ENCODE measurements at regions of chr1 and their contacts with region 1.

Region 1: DNA sequence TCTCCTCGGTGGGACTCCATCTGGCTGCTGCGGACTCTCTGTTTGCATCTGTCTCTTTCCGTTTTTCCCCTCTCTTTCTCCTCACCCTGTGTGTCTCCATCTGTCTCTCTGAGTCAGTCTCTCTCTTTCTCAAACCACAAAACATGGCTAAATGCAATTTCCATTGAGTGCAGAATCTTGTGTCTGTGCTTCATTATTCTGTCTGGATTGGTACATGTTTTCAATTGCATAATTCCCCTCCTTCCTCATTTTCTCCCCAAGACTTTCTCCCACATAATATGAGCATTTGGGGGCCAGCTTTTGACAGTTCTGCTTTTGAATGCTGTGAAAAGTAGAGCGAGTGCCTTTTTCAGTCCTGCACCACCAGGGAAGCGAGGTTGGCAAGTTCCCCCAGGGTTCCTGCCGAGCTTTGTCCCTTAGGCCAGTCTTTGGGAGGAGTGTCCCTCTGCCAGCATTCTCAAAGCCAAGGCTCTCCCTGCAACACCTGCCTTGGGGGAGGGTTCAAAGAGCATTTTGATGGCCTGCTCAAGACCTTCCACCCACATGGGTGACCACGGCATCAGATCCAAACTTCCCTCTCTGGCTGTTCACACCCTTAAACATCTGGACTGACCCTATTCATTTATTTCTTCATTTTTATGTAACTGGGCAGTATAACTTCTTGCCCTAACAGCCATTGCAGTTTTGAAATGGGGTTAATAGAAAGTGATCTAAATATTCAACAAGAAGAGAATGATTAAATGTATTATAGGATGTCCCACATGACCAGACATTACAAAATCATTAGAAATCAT is 32.8 kb upstream of the SCMH1 start:
- DNase-seq: no peak
- ATAC-seq: peak; percentile 55

Region 2: GRCh38 chr1:39609618-39610331 is 1665.2 kb before region 1 on chr1:
- intact Hi-C with region 1: no loop called
- DNase-seq: peak; percentile 76
- ATAC-seq: peak; percentile 95

Region 3: DNA sequence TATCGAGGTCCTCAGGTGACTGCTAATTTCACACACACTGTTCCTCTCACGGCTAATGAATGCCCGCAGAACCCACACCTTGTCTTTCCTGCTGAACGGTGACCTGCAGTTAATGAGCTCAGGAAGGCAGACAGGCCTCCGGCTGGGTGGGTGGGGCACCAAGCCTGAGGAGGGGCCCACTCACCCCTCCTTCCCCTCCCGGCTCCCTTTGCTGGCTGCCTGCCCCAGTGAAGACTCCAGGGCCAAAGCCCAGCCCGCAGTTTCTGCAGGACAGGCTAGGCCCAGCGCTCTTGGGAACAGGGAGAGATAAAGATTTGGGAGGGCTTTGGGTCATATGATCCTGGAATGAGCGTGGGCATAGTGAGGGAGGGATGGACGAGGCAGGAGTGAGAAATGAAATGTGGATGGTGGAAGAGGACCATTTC is 112.7 kb after region 1 on chr1:
- intact Hi-C with region 1: no loop called
- DNase-seq: peak; percentile 85
- ATAC-seq: peak; percentile 74

Region 4: GRCh38 chr1:41416552-41417334 is 141.8 kb after region 1 on chr1:
- intact Hi-C with region 1: loop called (anchors 5 kb)
- DNase-seq: peak; percentile 77
- ATAC-seq: peak; percentile 71